ENCODE measurements at regions of chr10 and their contacts with region 1.

Region 1: GRCh38 chr10:95246579-95247051 is 44.2 kb downstream of the PDLIM1 start:
- DNase-seq: peak in 1 of 2 experiments; percentile 90
- H3K4me3 ChIP-seq: no peak overlapping the region
- H3K27ac ChIP-seq: no peak overlapping the region
- H3K4me1 ChIP-seq: peaks cover 0 to 11% (median 2%) of the 10 kb centered on the region in 4 experiments; a peak in 4 of 7 replicates
- H3K27me3 ChIP-seq: no peaks in the 10 kb centered on the region
- CTCF ChIP-seq: peak; percentile 61 to 89 (median 82)
- EP300 ChIP-seq: no peak
- POLR2A ChIP-seq: no peak
- RAD21 ChIP-seq: peak; percentile 85 to 89

Region 2: DNA sequence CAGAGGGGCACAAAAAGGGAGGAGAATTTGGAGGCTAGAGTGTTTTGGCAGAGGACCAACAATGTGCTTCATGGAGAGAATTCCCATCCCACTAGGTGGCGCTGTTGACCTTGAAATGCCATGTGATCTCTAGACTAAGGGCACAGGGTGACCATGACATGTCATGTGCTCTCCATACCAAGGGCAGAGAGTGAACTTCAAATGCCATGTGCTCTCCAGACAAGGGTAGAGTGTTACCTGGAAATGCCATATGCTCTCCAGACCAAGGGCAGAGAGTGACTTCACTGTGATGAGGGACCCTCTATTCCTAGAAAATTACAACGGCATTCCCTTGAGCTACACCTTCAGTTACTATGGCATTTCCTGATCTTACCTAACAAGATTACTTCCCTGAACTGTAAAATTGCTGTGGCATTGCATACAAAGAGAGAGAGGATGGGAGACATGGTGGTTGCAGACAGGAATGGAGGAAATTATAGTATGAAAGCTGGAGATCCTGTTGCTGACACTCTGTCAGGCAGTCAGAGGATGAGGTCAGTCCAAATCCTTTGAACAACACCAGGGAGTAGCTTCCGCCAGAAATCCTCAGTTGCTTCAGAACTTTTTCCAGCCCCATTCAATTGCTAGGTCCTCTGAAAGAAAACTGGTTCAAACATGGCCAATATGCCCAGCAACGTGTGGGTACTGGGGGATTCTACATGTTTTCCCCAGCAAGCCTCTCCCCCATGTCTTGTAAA is 113.4 kb before region 1 on chr10:
- CTCF ChIA-PET with region 1: interaction called, 79 read pairs
- POLR2A ChIA-PET with region 1: interaction called, 3 read pairs
- DNase-seq: peak; percentile 67 to 95
- H3K4me3 ChIP-seq: no peak overlapping the region
- H3K27ac ChIP-seq: no peak overlapping the region
- H3K4me1 ChIP-seq: no peaks in the 10 kb centered on the region
- H3K27me3 ChIP-seq: no peaks in the 10 kb centered on the region
- CTCF ChIP-seq: peak; percentile 59 to 98 (median 83)
- EP300 ChIP-seq: no peak
- POLR2A ChIP-seq: no peak
- RAD21 ChIP-seq: peak; percentile 98

Region 3: DNA sequence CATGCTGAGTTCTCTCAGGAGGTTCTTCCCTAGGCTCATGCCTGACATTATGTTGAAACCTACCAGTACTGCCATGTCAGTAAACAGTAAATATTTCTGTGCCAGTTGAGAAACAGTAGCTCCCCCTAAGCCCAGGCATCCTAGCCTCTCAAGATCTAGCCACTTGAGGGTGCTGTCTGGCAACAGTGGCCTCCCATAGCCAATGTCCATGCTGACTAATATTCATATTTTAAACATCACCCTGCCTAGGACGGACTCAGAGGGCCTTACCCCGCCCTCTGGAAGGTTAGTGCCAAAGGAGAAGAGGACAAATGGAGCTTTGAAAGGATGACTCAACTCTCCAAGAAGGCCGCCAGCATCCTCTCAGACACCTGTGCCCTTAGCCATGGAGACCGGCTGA is 44.9 kb before region 1 on chr10:
- CTCF ChIA-PET with region 1: interaction called, 68 read pairs
- POLR2A ChIA-PET with region 1: interaction called, 3 read pairs
- DNase-seq: no peak
- H3K4me3 ChIP-seq: no peak overlapping the region
- H3K27ac ChIP-seq: no peak overlapping the region
- H3K4me1 ChIP-seq: peaks cover 0 to 2% (median 0%) of the 10 kb centered on the region in 4 experiments; a peak in 1 of 7 replicates
- H3K27me3 ChIP-seq: no peaks in the 10 kb centered on the region
- CTCF ChIP-seq: peak; percentile 46 to 68 (median 57)
- EP300 ChIP-seq: no peak
- POLR2A ChIP-seq: no peak
- RAD21 ChIP-seq: peak; percentile 67 to 73

Region 4: DNA sequence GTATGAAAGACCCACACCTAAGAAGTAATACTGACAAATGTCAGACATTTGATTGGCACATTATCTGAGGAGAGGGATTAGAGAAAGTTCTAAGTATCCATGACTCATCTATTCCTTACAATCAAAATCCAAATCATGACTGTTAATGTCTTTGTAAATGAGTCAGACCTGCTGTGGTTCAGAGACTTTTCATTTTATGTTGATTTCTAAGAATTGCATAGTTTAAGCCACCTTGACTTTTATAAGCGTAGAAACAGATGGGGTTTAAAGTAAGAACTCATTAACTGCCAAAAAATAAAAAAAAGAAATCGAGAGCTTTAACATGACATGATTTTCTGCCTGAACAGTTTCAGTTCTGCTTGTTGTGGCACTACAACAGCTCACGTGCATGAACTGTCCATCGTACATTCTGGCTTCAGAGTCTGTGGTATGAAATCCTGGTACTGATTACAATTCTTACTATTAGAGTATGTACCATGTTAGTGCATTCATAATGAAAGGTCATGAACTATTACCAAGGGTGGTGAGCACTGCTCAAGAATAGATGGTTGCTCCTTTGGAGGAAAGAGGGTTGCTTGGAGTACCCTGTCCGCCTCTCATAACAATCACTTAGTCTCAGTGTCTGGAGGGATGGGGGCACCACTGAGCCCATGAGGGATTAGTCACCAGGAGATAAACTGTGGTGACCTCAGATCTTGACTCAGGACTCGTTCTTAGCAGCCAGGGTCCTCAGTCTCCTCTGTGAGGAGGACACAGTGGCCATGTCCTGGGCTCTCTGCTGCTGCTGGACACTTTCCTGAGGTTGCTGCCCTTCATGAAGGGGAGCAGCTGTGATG is 10.3 kb before region 1 on chr10:
- CTCF ChIA-PET with region 1: interaction called, 33 read pairs
- POLR2A ChIA-PET with region 1: interaction called, 57 read pairs
- DNase-seq: no peak
- H3K4me3 ChIP-seq: no peak overlapping the region
- H3K27ac ChIP-seq: no peak overlapping the region
- H3K4me1 ChIP-seq: peaks cover 0 to 10% (median 8%) of the 10 kb centered on the region in 4 experiments; a peak in 5 of 7 replicates
- H3K27me3 ChIP-seq: no peaks in the 10 kb centered on the region
- CTCF ChIP-seq: no peak
- EP300 ChIP-seq: no peak
- POLR2A ChIP-seq: no peak
- RAD21 ChIP-seq: no peak

Region 5: GRCh38 chr10:95279042-95279820 is 32.6 kb after region 1 on chr10:
- CTCF ChIA-PET with region 1: interaction called, 23 read pairs
- POLR2A ChIA-PET with region 1: no interaction called
- DNase-seq: no peak
- H3K4me3 ChIP-seq: no peak overlapping the region
- H3K27ac ChIP-seq: no peak overlapping the region
- H3K4me1 ChIP-seq: peaks cover 0 to 17% (median 5%) of the 10 kb centered on the region in 4 experiments; a peak in 3 of 7 replicates
- H3K27me3 ChIP-seq: no peaks in the 10 kb centered on the region
- CTCF ChIP-seq: no peak
- EP300 ChIP-seq: no peak
- POLR2A ChIP-seq: no peak
- RAD21 ChIP-seq: no peak

Region 6: GRCh38 chr10:95341716-95342130 is 95.1 kb after region 1 on chr10:
- CTCF ChIA-PET with region 1: interaction called, 17 read pairs
- POLR2A ChIA-PET with region 1: no interaction called
- DNase-seq: no peak
- H3K4me3 ChIP-seq: no peak overlapping the region
- H3K27ac ChIP-seq: no peak overlapping the region
- H3K4me1 ChIP-seq: peaks cover 0 to 5% (median 0%) of the 10 kb centered on the region in 4 experiments; a peak in 1 of 7 replicates
- H3K27me3 ChIP-seq: no peaks in the 10 kb centered on the region
- CTCF ChIP-seq: no peak
- EP300 ChIP-seq: no peak
- POLR2A ChIP-seq: no peak
- RAD21 ChIP-seq: no peak

Region 7: DNA sequence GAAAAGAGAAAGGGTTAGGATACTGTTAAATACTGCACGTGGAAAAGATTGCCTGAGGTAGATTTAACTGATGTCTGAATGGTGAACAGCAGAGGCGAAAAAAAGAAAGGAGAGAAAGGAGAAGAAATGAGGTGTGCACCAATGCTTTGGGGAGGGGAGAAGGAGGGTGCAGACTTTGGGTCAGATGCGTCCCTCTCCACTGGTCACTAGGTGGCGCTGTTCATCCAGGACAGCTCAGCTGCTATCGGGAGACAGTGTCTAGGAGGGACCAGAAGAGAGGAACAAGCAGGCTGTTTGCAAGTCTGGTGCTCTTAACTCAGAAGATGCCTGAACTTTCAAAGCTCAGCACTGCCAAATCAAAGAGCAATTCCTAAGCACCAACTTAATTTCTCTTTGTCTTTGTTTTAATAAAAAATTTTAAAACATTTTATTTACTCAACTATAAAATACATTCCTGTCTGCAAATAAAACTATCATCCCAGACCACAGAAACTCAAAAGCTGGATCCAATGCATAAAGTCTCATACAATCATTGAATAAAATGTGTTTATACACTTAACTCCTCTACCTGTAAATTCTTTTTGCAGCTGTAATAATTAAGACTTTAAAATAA is 128.1 kb after region 1 on chr10:
- CTCF ChIA-PET with region 1: interaction called, 28 read pairs
- POLR2A ChIA-PET with region 1: no interaction called
- DNase-seq: peak; percentile 56 to 85
- H3K4me3 ChIP-seq: no peak overlapping the region
- H3K27ac ChIP-seq: no peak overlapping the region
- H3K4me1 ChIP-seq: peaks cover 0 to 5% (median 4%) of the 10 kb centered on the region in 4 experiments; a peak in 4 of 7 replicates
- H3K27me3 ChIP-seq: no peaks in the 10 kb centered on the region
- CTCF ChIP-seq: peak; percentile 91 to 100 (median 100)
- EP300 ChIP-seq: no peak
- POLR2A ChIP-seq: no peak
- RAD21 ChIP-seq: peak; percentile 96 to 99